ENCODE measurements at regions of chr2 and their contacts with region 1.

Region 1: GRCh38 chr2:46010925-46011490 is 286.2 kb upstream of the EPAS1 start:
- DNase-seq: no peak
- H3K4me3 ChIP-seq: no peak overlapping the region
- CTCF ChIP-seq: peak; percentile 37

Region 2: DNA sequence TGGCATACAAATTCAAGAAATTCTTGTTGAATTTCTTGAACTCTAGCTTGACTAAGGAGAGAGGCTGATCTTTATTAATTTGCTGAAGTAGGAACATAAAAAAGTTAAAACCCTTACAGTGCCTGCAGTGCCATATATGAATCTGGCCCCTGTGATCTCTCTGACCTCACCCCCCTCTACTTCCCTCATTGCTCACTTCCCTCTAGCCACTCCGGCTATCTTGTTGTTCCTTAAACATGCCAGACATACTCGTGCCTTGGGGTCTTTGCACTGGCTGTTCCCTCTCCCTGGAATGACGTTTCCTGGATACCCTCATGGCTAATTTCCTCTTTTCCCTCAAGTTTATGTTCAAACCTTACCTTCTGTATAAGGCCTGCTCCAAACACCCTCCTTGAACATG is 755.4 kb before region 1 on chr2:
- CTCF ChIA-PET with region 1: no interaction called
- POLR2A ChIA-PET with region 1: no interaction called
- DNase-seq: no peak
- H3K4me3 ChIP-seq: no peak overlapping the region
- CTCF ChIP-seq: no peak

Region 3: GRCh38 chr2:45964226-45964845 is 46.7 kb before region 1 on chr2:
- CTCF ChIA-PET with region 1: no interaction called
- POLR2A ChIA-PET with region 1: no interaction called
- DNase-seq: peak; percentile 36
- H3K4me3 ChIP-seq: no peak overlapping the region
- CTCF ChIP-seq: no peak

Region 4: GRCh38 chr2:45993476-45993991 is 17.5 kb before region 1 on chr2:
- CTCF ChIA-PET with region 1: interaction called, 53 read pairs
- POLR2A ChIA-PET with region 1: interaction called, 3 read pairs
- DNase-seq: no peak
- H3K4me3 ChIP-seq: no peak overlapping the region
- CTCF ChIP-seq: peak; percentile 70

Region 5: GRCh38 chr2:46029332-46029811 is 18.4 kb after region 1 on chr2:
- CTCF ChIA-PET with region 1: interaction called, 15 read pairs
- POLR2A ChIA-PET with region 1: no interaction called
- DNase-seq: no peak
- H3K4me3 ChIP-seq: no peak overlapping the region
- CTCF ChIP-seq: no peak

Region 6: DNA sequence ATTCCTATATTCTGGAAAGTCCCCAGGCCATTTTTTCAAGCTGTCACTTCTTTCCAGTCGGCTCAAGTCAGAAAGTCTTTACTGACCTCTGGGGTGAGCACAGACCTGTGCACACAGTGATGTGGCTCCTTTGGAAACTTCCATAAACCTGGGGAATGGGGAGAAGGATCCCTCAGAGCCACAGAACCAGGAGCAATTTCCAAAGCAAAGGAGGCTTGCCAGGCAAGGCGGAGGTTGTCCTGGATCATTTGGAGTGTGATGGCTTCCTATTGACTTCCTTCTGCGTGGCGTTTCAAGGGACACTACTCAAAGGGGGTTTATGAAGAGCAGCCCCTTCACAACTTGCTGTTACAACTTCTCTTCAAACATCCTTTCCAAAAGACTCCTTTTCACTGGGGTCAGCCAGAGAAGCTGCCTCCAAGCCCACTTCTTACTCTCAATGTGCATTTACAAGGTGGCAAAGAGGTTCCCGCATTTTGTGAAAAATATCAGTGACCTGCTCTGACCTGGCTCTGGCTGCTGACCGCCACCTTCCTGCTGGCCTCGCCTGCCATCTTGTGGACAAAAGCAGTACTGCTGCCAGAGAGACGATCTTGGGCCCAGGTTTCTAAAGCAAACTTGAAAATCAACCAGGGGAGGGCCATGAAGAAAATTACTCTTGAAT is 450.1 kb after region 1 on chr2:
- CTCF ChIA-PET with region 1: interaction called, 21 read pairs
- POLR2A ChIA-PET with region 1: no interaction called
- DNase-seq: no peak
- H3K4me3 ChIP-seq: no peak overlapping the region
- CTCF ChIP-seq: peak; percentile 94